ENCODE measurements at regions of chr6 and their contacts with region 1.

Region 1: DNA sequence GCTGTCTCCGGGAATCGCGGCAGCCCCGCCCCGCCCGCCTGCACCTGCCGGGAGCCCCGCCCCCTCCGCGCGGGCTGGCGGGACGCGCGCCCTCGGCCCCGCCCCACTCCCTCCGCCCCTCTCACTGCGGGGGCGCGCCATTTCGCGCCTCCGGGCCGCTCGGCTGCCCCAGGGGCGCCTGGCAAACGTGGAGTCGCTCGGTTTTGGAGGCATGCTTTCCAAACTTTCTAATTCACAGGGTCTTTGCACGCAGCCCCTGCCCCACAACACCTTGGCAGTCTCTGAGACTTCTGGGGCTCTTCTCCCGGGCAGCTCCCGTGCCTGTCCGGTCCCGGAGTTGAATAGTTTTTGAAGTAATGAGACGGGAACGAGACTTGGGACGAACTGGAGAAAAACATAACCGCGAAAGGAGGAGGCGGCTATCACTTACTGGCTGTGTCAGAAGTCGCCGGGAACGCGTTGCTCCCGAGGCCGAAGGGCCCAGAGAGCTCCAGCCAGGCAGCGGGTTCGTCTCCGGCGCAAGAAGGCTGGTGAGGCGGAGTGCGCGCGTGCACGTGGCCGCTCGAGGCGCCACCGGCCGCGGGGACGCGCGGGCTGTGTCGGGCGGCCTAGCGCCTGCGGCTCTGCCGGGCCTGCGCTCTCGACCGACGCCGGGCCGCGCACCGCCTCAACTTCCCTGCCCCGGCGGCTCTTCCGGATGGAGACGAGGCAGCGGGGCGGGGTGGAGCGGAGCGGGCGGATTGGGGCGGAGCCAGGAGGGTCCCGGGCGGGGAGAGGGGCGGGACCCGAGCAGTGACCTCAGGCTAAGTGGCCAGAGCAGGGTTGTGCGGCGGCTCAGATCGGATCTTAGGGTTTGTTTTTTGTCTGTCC is at the start of gene MCM9:
- DNase-seq: peak; percentile 89
- H3K4me3 Mint-ChIP-seq: peak within 1 kb of the TSS; percentile 87
- H3K27ac Mint-ChIP-seq: peak within 1 kb of the TSS; percentile 90
- H3K4me1 Mint-ChIP-seq: peaks cover 29% of the 10 kb centered on the region
- H3K27me3 Mint-ChIP-seq: no peaks in the 10 kb centered on the region
- total RNA-seq, gene MCM9: 16.3 to 16.4 TPM

Region 2: DNA sequence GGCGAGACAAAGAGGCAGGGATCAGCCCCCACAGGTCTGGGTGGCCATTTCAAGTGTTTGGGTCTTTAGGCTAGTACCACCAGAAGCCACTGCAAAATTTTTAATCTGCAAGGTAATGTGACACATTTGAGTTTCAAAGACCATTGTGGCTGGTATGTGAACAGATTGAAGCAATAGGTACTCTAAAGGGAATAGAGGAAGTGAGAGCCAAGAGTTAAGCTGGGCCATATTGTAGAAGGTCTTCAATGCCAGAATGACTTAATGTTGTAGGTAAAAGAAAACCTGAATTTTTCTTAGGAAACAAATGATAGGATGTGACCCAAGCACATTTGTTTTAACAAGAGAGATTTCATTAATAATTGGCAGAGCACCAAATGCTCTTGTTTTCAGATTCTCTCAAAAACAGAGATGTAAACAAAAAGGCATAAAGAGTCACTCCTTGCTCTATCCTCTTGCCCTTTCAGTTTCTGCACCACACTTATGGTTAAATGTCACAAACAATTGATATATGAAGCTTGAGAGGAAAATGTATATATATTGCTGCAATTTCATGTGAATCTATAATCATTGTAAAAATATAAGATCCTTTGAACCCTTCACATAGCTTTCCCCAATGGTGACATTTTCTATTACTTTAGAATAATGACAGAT is 693.7 kb before region 1 on chr6:
- CTCF ChIA-PET with region 1: no interaction called
- intact Hi-C with region 1: no loop called
- DNase-seq: no peak
- H3K4me3 Mint-ChIP-seq: no peak overlapping the region
- H3K27ac Mint-ChIP-seq: no peak overlapping the region
- H3K4me1 Mint-ChIP-seq: no peaks in the 10 kb centered on the region
- H3K27me3 Mint-ChIP-seq: peaks cover 23% of the 10 kb centered on the region

Region 3: DNA sequence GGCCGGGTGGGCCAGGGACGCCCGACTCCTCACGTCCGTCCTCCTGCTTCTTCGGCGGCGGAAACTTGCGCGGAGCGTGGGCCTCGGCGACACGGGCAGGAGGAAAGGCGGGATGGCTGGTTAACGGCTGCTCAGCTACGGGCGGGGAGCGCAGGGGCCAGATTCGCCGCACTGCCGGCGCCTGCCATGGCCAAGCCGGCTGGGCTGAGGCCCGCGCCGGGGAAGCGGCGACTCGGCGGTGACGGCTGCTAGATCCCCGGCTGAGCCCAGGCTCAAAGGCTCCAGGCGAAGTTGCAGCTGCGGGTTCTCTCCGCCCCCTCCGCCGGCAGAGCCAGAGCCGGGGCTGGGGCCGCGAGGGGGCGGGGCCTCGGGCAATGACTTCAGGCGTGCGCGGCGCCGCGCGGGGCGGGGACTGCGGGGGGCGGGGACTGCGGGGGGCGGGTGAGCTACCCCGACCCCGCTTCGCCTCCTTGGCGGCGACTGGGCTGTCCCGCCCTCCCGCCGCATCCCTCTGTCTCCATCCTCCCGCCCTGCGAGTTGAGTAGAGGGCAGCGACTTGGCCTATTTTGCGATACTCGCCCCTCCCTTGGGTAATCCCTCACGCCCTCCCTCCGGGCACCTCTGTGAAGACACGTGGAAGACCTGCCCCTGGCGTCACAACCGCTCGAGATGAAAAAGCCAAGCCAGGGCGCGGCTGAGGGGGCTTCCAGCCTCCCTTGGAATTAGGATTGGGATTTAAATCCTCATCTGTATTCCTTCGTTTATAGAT is 283.2 kb before region 1 on chr6 and contains the start of gene CEP85L:
- CTCF ChIA-PET with region 1: no interaction called
- intact Hi-C with region 1: loop called (anchors 2 kb)
- DNase-seq: peak; percentile 90
- H3K4me3 Mint-ChIP-seq: peak within 1 kb of the TSS; percentile 86
- H3K27ac Mint-ChIP-seq: peak within 1 kb of the TSS; percentile 89
- H3K4me1 Mint-ChIP-seq: peaks cover 49% of the 10 kb centered on the region
- H3K27me3 Mint-ChIP-seq: no peaks in the 10 kb centered on the region
- total RNA-seq, gene CEP85L: 31.4 to 31.9 TPM

Region 4: DNA sequence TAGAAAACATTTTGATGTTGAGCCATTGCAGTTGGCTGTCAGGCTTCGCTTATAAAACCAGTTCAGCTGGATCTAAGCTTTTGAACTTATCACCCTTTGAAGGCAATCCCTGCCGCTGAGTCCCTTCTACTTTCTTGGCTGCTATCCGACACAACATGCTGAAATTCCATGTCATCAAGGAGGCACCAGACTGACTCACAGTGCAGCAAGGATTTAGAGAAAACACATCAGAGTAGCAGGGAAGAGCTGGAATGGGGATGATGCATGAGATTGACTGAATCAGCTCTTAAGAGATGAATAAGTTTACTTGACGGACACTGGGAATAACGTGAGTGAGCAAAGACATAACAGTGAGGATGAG is 549.9 kb after region 1 on chr6:
- CTCF ChIA-PET with region 1: no interaction called
- intact Hi-C with region 1: no loop called
- DNase-seq: no peak
- H3K4me3 Mint-ChIP-seq: no peak overlapping the region
- H3K27ac Mint-ChIP-seq: no peak overlapping the region
- H3K4me1 Mint-ChIP-seq: no peaks in the 10 kb centered on the region
- H3K27me3 Mint-ChIP-seq: peaks cover 6% of the 10 kb centered on the region